Activated naive CD4-positive, alpha-beta T cell treated with anti-CD3 and anti-CD28 coated beads for 36 hours (primary cell): ENCODE measurements at regions of chr4 and their contacts with region 1.

Region 1: DNA sequence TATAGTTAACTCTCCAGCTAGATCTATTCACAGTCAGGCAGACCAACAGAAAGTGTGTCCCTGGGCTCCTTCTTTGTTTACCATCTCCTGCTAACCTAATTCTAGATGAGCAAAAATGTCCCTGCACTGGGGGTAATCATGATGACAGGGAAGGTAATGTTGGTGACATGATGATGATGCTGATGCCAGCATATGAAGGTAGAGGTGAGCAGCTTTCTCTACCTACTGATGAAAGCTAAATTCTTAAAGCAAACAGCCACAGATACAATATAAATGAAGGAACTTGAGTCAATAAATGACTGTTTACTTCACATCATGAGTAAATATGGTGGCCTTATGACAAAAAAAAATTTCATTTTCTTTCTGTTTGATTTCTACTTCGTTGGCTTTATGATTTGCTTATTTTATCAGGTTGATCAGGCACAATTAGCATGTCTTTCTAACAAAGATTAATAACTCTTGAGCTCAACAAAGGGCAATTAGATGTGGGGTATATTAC is 78.4 kb downstream of the NKX6-1 start:
- DNase-seq: no peak
- H3K4me3 Mint-ChIP-seq: no peak overlapping the region
- H3K27ac Mint-ChIP-seq: no peak overlapping the region
- H3K4me1 Mint-ChIP-seq: no peaks in the 10 kb centered on the region
- H3K27me3 Mint-ChIP-seq: peaks cover 4% of the 10 kb centered on the region

Region 2: GRCh38 chr4:84401701-84402306 is 18.9 kb before region 1 on chr4:
- CTCF ChIA-PET with region 1: no interaction called
- intact Hi-C with region 1: no loop called
- DNase-seq: no peak
- H3K4me3 Mint-ChIP-seq: no peak overlapping the region
- H3K27ac Mint-ChIP-seq: no peak overlapping the region
- H3K4me1 Mint-ChIP-seq: no peaks in the 10 kb centered on the region
- H3K27me3 Mint-ChIP-seq: no peaks in the 10 kb centered on the region

Region 3: GRCh38 chr4:84433633-84434222 is 13.1 kb after region 1 on chr4:
- CTCF ChIA-PET with region 1: interaction called, 11 read pairs
- intact Hi-C with region 1: no loop called
- DNase-seq: no peak
- H3K4me3 Mint-ChIP-seq: no peak overlapping the region
- H3K27ac Mint-ChIP-seq: no peak overlapping the region
- H3K4me1 Mint-ChIP-seq: no peaks in the 10 kb centered on the region
- H3K27me3 Mint-ChIP-seq: peaks cover 3% of the 10 kb centered on the region

Region 4: DNA sequence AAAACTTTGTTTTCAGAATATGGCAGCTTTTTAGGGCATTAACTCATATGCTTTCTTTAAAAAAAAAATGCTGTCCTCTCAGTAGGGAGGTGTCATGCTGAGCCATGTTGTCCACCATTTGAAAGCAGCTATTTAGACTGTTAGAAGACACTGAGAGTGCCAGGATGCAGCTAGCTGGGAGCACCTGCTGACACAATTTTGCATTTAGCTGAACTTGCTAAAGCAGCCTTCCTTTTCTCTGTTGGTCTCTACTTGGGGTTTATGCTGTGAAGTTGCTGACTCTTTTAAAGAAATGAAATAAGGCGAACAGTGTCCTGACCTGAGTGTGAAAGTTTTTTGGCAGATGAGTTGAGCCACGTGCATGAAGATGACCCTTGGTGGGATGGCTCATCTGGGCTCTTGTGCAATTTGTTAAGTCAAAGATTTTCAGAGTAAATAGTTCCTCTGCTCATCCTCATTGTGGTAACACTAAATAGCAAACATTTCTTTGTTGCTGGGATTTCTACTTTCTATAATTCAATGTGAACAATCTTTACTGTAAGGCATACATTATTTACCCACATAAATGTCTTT is 226.7 kb after region 1 on chr4:
- CTCF ChIA-PET with region 1: no interaction called
- intact Hi-C with region 1: no loop called
- DNase-seq: no peak
- H3K4me3 Mint-ChIP-seq: no peak overlapping the region
- H3K27ac Mint-ChIP-seq: no peak overlapping the region
- H3K4me1 Mint-ChIP-seq: no peaks in the 10 kb centered on the region
- H3K27me3 Mint-ChIP-seq: no peaks in the 10 kb centered on the region